Activated naive CD4-positive, alpha-beta T cell treated with anti-CD3 and anti-CD28 coated beads for 36 hours (primary cell): ENCODE measurements at regions of chr16 and their contacts with region 1.

Region 1: GRCh38 chr16:31868691-31869167 is 4.9 kb upstream of the ZNF267 start:
- DNase-seq: peak; percentile 90
- H3K4me3 Mint-ChIP-seq: peak overlapping the region; percentile 46
- H3K27ac Mint-ChIP-seq: peak overlapping the region; percentile 82
- H3K4me1 Mint-ChIP-seq: peaks cover 50% of the 10 kb centered on the region
- H3K27me3 Mint-ChIP-seq: no peaks in the 10 kb centered on the region

Region 2: DNA sequence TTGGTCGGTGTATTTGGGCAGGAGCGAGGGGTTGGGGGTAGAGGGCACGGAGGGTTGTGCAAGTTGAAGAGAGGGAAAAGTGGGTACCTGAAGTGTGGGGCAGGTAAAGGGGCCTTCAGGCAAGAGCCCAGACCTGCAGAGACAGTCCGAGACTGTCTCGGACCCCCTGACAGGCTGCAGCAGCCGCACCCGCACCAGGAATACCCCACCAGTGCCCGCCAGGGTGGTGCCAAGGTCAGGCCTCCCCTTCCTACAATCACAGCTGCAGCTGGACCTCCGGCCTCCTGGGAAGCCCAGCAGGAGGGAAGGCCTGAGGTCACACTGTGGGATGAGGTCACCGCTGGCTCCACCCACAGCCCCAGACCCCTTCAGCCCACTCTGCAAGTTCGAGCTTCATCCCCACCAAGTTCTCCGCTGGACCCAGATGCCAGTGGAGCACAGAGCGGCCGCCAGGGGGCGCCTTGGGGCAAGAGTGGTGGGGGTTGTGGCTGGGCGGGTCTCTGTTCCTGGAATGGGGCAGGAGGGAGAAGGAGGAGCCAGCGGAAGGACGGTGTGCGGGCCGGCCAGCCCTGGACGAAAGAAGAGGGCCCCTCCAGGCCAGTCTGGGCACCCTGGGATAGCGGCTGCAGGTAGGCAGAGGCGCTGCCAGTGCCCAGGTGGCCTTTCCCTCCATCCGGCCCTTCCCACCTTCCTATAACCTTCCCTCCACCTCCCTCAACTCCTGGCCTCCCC is 883.9 kb before region 1 on chr16 and contains the start of gene HSD3B7:
- CTCF ChIA-PET with region 1: interaction called, 3 read pairs
- intact Hi-C with region 1: loop called (anchors 2 kb)
- DNase-seq: peak; percentile 87
- H3K4me3 Mint-ChIP-seq: no peak within 1 kb of the TSS
- H3K27ac Mint-ChIP-seq: no peak within 1 kb of the TSS
- H3K4me1 Mint-ChIP-seq: no peaks in the 10 kb centered on the region
- H3K27me3 Mint-ChIP-seq: no peaks in the 10 kb centered on the region
- total RNA-seq, gene HSD3B7: 0.69 to 0.98 TPM

Region 3: GRCh38 chr16:31117391-31118197 is 751.1 kb before region 1 on chr16 and contains the start of gene KAT8:
- CTCF ChIA-PET with region 1: no interaction called
- intact Hi-C with region 1: loop called (anchors 1 kb)
- DNase-seq: peak; percentile 99
- H3K4me3 Mint-ChIP-seq: peak within 1 kb of the TSS; percentile 82
- H3K27ac Mint-ChIP-seq: peak within 1 kb of the TSS; percentile 70
- H3K4me1 Mint-ChIP-seq: peaks cover 28% of the 10 kb centered on the region
- H3K27me3 Mint-ChIP-seq: no peaks in the 10 kb centered on the region
- total RNA-seq, gene KAT8: 58.1 to 64.5 TPM

Region 4: GRCh38 chr16:31301708-31302400 is 566.9 kb before region 1 on chr16:
- CTCF ChIA-PET with region 1: no interaction called
- intact Hi-C with region 1: loop called (anchors 2 kb)
- DNase-seq: peak; percentile 21
- H3K4me3 Mint-ChIP-seq: no peak overlapping the region
- H3K27ac Mint-ChIP-seq: no peak overlapping the region
- H3K4me1 Mint-ChIP-seq: peaks cover 8% of the 10 kb centered on the region
- H3K27me3 Mint-ChIP-seq: peaks cover 7% of the 10 kb centered on the region

Region 5: DNA sequence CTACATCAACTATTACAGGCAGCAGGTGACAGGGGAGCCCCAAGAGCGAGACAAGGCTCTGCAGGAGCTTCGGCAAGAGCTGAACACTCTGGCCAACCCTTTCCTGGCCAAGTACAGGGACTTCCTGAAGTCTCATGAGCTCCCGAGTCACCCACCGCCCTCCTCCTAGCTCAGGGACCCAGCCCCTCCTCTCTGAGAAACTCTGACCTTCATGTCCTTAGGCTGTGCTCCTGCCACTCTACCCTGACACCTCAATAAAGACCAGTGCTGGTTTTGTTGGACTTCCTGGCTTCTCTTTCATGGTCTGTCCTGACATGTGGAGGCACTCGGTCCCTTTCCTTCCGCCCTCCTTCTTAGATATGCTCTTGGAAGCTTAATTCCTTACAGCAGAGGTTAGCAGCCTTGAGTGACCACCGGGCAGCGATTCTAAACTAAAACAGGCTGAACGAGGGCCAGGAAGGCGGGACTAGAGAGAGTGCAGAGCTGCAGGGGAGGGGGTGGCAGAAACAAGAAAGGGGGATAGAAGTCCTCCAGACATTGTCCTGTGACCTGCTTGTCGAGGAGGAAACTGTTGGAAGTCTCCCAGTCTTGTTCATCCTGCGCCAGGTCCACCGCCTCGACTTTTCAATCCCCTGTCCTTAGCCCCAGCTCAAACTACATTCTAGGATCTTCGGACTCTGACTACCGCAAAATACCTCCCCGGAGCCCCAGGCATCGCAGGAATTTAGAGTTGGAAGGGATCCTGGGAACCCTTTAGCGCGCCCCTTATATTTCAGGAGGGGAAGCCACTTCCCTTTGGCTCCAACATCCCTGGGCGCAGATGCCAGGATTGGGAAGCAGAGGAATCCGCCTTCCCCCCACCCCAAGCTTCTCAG is 340.0 kb before region 1 on chr16:
- CTCF ChIA-PET with region 1: interaction called, 3 read pairs
- intact Hi-C with region 1: loop called (anchors 5 kb)
- DNase-seq: no peak
- H3K4me3 Mint-ChIP-seq: peak overlapping the region; percentile 22
- H3K27ac Mint-ChIP-seq: no peak overlapping the region
- H3K4me1 Mint-ChIP-seq: peaks cover 21% of the 10 kb centered on the region
- H3K27me3 Mint-ChIP-seq: peaks cover 8% of the 10 kb centered on the region

Region 6: DNA sequence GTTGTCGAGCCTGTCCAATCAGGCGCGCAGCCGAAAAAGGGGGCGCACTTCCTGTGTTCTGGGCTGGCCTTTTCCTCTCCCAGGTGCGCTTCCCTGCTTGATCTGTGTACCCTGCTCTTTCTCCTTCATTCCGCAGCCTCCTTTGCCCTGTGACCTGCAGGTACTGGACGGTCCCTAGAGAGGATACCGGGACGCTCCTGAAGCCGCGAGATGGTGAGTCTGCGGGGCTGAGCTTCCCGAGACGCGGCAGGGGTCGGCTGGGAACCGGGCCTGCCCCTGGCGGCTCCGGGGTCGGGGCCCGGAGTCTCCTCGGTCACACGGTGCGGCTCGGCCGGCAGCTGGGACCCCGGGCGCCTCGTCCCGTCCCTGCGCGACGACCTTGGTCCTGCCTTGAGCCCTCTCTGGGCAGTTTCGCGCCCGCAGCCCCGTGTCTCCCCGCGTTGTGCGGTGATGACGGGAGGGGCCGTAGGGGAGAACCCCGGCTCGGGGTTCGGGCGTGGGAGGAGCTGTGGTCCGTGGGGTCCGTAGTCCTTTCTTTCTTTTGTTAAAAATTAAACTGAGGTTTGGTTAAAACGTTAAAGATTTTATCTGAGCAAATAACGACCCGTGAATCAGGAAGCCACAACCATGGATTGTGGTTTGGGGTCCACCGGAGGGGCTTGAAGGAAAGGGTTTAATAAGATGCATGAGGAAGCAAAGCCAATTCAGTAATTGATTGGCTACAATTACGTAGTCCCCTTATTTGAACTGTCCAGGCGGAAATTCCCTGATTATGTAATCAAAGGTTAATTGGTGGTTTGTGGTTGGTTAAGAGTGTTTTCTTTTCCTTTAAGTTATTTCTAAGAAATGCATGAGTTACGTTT is 168.0 kb before region 1 on chr16:
- CTCF ChIA-PET with region 1: interaction called, 5 read pairs
- intact Hi-C with region 1: loop called (anchors 1 kb)
- DNase-seq: peak; percentile 93
- H3K4me3 Mint-ChIP-seq: peak overlapping the region; percentile 85
- H3K27ac Mint-ChIP-seq: peak overlapping the region; percentile 95
- H3K4me1 Mint-ChIP-seq: peaks cover 27% of the 10 kb centered on the region
- H3K27me3 Mint-ChIP-seq: no peaks in the 10 kb centered on the region

Region 7: GRCh38 chr16:31920373-31920772 is 51.6 kb after region 1 on chr16:
- CTCF ChIA-PET with region 1: no interaction called
- intact Hi-C with region 1: no loop called
- DNase-seq: no peak
- H3K4me3 Mint-ChIP-seq: no peak overlapping the region
- H3K27ac Mint-ChIP-seq: no peak overlapping the region
- H3K4me1 Mint-ChIP-seq: no peaks in the 10 kb centered on the region
- H3K27me3 Mint-ChIP-seq: no peaks in the 10 kb centered on the region